ENCODE measurements at regions of chr18 and their contacts with region 1.

Region 1: GRCh38 chr18:9102508-9103375 is at the start of gene NDUFV2:
- DNase-seq: peak; percentile 95 to 99
- H3K4me3 ChIP-seq: peak within 1 kb of the TSS; percentile 48
- H3K4me3 Mint-ChIP-seq: peak within 1 kb of the TSS; percentile 85
- H3K27ac Mint-ChIP-seq: peak within 1 kb of the TSS; percentile 96
- H3K4me1 ChIP-seq: peaks cover 29% of the 10 kb centered on the region
- H3K4me1 Mint-ChIP-seq: peaks cover 18% of the 10 kb centered on the region
- H3K27me3 ChIP-seq: no peaks in the 10 kb centered on the region
- H3K27me3 Mint-ChIP-seq: no peaks in the 10 kb centered on the region
- CTCF ChIP-seq: no peak
- total RNA-seq, gene NDUFV2: 211 and 220 TPM in 2 replicates

Region 2: GRCh38 chr18:9048808-9049494 is 53.8 kb before region 1 on chr18:
- CTCF ChIA-PET with region 1: no interaction called
- POLR2A ChIA-PET with region 1: no interaction called
- intact Hi-C with region 1: no loop called
- DNase-seq: peak in 1 of 2 experiments; percentile 17
- H3K4me3 ChIP-seq: no peak overlapping the region
- H3K4me3 Mint-ChIP-seq: no peak overlapping the region
- H3K27ac Mint-ChIP-seq: no peak overlapping the region
- H3K4me1 ChIP-seq: peaks cover 19% of the 10 kb centered on the region
- H3K4me1 Mint-ChIP-seq: peaks cover 18% of the 10 kb centered on the region
- H3K27me3 ChIP-seq: no peaks in the 10 kb centered on the region; the same call in 1 of the 2 replicates
- H3K27me3 Mint-ChIP-seq: no peaks in the 10 kb centered on the region
- CTCF ChIP-seq: no peak

Region 3: GRCh38 chr18:9066817-9067306 is 35.9 kb before region 1 on chr18:
- CTCF ChIA-PET with region 1: no interaction called
- POLR2A ChIA-PET with region 1: no interaction called
- intact Hi-C with region 1: loop called (anchors 2 kb)
- DNase-seq: no peak
- H3K4me3 ChIP-seq: no peak overlapping the region
- H3K4me3 Mint-ChIP-seq: no peak overlapping the region
- H3K27ac Mint-ChIP-seq: no peak overlapping the region
- H3K4me1 ChIP-seq: no peaks in the 10 kb centered on the region; the same call in 1 of the 2 replicates
- H3K4me1 Mint-ChIP-seq: peaks cover 14% of the 10 kb centered on the region
- H3K27me3 ChIP-seq: no peaks in the 10 kb centered on the region
- H3K27me3 Mint-ChIP-seq: no peaks in the 10 kb centered on the region
- CTCF ChIP-seq: no peak

Region 4: DNA sequence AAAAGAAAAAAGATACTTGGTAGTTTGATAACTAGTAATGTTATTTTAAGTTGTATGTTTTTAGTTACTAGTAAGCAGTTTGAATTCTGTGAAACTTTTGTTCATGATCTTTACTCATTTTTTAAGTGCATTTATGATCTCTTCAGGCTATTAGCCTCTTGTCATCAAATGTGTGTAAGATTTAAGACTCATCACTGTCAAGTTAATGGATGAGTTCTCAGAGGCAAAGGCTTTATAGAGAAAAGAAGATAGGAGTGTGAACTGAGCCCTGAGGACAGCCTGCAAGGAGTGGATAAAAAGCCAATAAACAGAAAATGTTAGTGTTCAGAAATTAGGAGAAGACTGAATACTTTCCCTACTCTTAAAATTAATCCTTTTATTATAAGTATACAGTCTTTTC is 13.2 kb after region 1 on chr18:
- CTCF ChIA-PET with region 1: no interaction called
- POLR2A ChIA-PET with region 1: no interaction called
- intact Hi-C with region 1: no loop called
- DNase-seq: no peak
- H3K4me3 ChIP-seq: no peak overlapping the region
- H3K4me3 Mint-ChIP-seq: no peak overlapping the region
- H3K27ac Mint-ChIP-seq: no peak overlapping the region
- H3K4me1 ChIP-seq: peaks cover 6% of the 10 kb centered on the region; the same call in 1 of the 2 replicates
- H3K4me1 Mint-ChIP-seq: peaks cover 12% of the 10 kb centered on the region
- H3K27me3 ChIP-seq: no peaks in the 10 kb centered on the region
- H3K27me3 Mint-ChIP-seq: no peaks in the 10 kb centered on the region
- CTCF ChIP-seq: no peak

Region 5: GRCh38 chr18:9136315-9137155 is 33.8 kb after region 1 on chr18 and contains the start of gene ANKRD12:
- CTCF ChIA-PET with region 1: interaction called, 6 read pairs
- POLR2A ChIA-PET with region 1: interaction called, 19 read pairs
- intact Hi-C with region 1: loop called (anchors 1 kb)
- DNase-seq: peak; percentile 97 to 98
- H3K4me3 ChIP-seq: peak within 1 kb of the TSS; percentile 96
- H3K4me3 Mint-ChIP-seq: peak within 1 kb of the TSS; percentile 94
- H3K27ac Mint-ChIP-seq: peak within 1 kb of the TSS; percentile 96
- H3K4me1 ChIP-seq: peaks cover 22% of the 10 kb centered on the region
- H3K4me1 Mint-ChIP-seq: peaks cover 22% of the 10 kb centered on the region
- H3K27me3 ChIP-seq: no peaks in the 10 kb centered on the region
- H3K27me3 Mint-ChIP-seq: no peaks in the 10 kb centered on the region
- CTCF ChIP-seq: no peak
- total RNA-seq, gene ANKRD12: 33.2 and 36.5 TPM in 2 replicates

Region 6: GRCh38 chr18:9156604-9157249 is 54.0 kb after region 1 on chr18:
- CTCF ChIA-PET with region 1: no interaction called
- POLR2A ChIA-PET with region 1: no interaction called
- intact Hi-C with region 1: no loop called
- DNase-seq: no peak
- H3K4me3 ChIP-seq: no peak overlapping the region
- H3K4me3 Mint-ChIP-seq: no peak overlapping the region
- H3K27ac Mint-ChIP-seq: no peak overlapping the region
- H3K4me1 ChIP-seq: peaks cover 6% of the 10 kb centered on the region; the same call in 1 of the 2 replicates
- H3K4me1 Mint-ChIP-seq: peaks cover 15% of the 10 kb centered on the region
- H3K27me3 ChIP-seq: no peaks in the 10 kb centered on the region
- H3K27me3 Mint-ChIP-seq: no peaks in the 10 kb centered on the region
- CTCF ChIP-seq: no peak

Region 7: GRCh38 chr18:9173770-9174233 is 71.1 kb after region 1 on chr18:
- CTCF ChIA-PET with region 1: no interaction called
- POLR2A ChIA-PET with region 1: no interaction called
- intact Hi-C with region 1: no loop called
- DNase-seq: no peak
- H3K4me3 ChIP-seq: no peak overlapping the region
- H3K4me3 Mint-ChIP-seq: no peak overlapping the region
- H3K27ac Mint-ChIP-seq: no peak overlapping the region
- H3K4me1 ChIP-seq: no peaks in the 10 kb centered on the region
- H3K4me1 Mint-ChIP-seq: no peaks in the 10 kb centered on the region
- H3K27me3 ChIP-seq: no peaks in the 10 kb centered on the region
- H3K27me3 Mint-ChIP-seq: no peaks in the 10 kb centered on the region
- CTCF ChIP-seq: no peak

Region 8: GRCh38 chr18:9474983-9475642 is 372.4 kb after region 1 on chr18 and contains the start of gene RALBP1:
- CTCF ChIA-PET with region 1: no interaction called
- POLR2A ChIA-PET with region 1: no interaction called
- intact Hi-C with region 1: loop called (anchors 1 kb)
- DNase-seq: peak; percentile 99 to 100
- H3K4me3 ChIP-seq: peak within 1 kb of the TSS; percentile 84
- H3K4me3 Mint-ChIP-seq: peak within 1 kb of the TSS; percentile 75
- H3K27ac Mint-ChIP-seq: peak within 1 kb of the TSS; percentile 86
- H3K4me1 ChIP-seq: peaks cover 25% of the 10 kb centered on the region
- H3K4me1 Mint-ChIP-seq: peaks cover 40% of the 10 kb centered on the region
- H3K27me3 ChIP-seq: no peaks in the 10 kb centered on the region
- H3K27me3 Mint-ChIP-seq: no peaks in the 10 kb centered on the region
- CTCF ChIP-seq: no peak
- total RNA-seq, gene RALBP1: 64.9 and 66.3 TPM in 2 replicates